ENCODE measurements at regions of chr16 and their contacts with region 1.

Region 1: DNA sequence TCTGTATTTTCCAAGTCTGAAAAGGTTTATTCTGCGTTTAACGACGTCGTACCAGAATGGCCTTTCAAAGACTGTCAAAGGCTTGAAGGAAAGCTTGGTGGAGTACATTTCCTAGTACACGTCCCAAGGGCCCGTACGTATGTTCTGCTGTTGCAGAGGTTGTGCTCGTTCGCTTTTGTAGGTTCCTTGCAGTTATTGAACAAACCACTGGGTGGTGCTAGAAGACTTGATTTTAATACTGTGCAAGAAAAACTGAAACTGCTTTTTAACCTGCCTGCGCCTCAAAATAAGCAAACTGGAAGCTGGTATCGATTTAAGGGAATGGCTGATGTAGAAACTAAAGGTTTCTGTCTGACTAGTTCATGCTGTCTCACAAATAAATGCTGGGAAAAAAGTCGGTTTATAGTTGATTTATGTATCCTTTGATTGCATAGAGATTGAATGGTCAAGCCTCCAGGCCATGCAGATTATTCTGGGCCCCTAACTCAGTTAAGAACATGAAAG is 54.6 kb downstream of the USP10 start:
- DNase-seq: peak in 1 of 2 donors; percentile 42
- ATAC-seq: peak; percentile 69 to 86 (median 78)
- H3K4me3 ChIP-seq: no peak overlapping the region
- H3K27ac ChIP-seq: no peak overlapping the region
- H3K4me1 ChIP-seq: peaks cover 27% of the 10 kb centered on the region
- H3K27me3 ChIP-seq: no peaks in the 10 kb centered on the region
- CTCF ChIP-seq: peak; percentile 86

Region 2: DNA sequence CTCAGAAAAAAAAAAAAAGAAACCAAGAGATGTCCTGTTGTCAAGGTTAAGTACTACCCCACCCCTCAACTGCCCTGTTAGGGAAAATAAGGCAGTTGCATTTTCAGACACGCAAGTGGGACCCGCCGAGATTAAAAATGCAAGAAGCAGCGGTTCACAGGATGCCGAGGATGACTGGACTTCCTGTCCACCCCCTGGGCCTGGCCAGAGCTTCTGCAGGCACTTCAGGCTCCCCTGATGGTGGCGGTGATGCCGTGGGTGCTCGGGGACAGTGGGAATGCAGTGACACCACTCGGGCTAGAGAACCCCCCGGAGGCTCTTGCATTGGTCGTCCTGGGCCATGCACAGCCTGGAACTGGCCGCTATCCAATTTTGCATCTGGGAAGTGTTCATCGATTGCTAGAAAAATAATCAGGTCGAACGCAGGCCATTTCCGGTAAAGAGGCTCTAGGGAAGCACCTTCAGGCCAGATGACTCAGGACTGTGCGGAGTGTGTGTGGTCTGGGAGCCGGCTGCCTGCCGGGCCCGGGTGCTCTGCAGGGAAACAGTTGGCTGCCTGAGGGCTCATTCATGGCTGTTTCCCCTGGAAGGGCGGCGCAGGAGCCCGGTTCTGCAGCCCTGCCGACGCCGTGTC is 52.0 kb after region 1 on chr16:
- intact Hi-C with region 1: loop called in 1 of 2 experiments (anchors 5 kb)
- DNase-seq: peak in 1 of 2 donors; percentile 77
- ATAC-seq: peak in 3 of 4 donors; percentile 59 to 68 (median 59)
- H3K4me3 ChIP-seq: no peak overlapping the region
- H3K27ac ChIP-seq: no peak overlapping the region
- H3K4me1 ChIP-seq: no peaks in the 10 kb centered on the region
- H3K27me3 ChIP-seq: no peaks in the 10 kb centered on the region
- CTCF ChIP-seq: no peak

Region 3: GRCh38 chr16:84952335-84953189 is 198.2 kb after region 1 on chr16:
- intact Hi-C with region 1: loop called (anchors 5 kb)
- DNase-seq: peak; percentile 66 to 75
- ATAC-seq: peak; percentile 93 to 98 (median 97)
- H3K4me3 ChIP-seq: no peak overlapping the region
- H3K27ac ChIP-seq: no peak overlapping the region
- H3K4me1 ChIP-seq: peaks cover 6% of the 10 kb centered on the region
- H3K27me3 ChIP-seq: no peaks in the 10 kb centered on the region
- CTCF ChIP-seq: peak; percentile 95

Region 4: DNA sequence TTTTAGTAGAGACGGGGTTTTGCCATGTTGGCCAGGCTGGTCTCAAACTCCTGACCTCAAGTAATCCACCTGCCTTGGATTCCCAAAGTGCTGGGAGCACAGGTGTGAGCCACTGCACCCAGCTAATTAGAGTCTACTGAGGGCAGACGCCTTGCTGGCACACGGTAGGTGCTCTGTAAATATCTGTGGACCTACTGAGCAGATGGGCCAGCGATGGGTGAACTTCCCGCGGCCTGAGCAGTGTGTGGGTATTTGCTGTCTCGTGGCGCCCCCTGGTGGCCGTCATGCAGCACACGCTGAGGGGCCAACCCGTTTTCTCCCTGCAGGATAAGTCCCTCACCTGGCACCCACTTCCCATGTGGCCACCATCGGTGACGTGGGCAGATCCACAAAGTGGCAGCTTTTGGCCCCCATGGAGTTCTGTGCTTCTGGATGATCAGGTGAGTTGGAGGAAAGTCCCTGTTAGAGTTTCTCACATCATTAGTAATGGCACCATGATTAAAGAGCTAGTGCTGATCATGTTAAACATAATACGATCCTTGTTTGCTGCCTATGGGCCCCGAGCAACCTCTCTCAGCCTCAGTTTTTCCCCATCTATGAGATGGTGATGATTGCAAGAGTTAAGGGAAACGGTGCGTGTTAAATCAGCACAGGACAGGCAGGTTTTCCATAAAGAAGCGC is 216.2 kb after region 1 on chr16:
- intact Hi-C with region 1: loop called (anchors 5 kb)
- DNase-seq: peak; percentile 84 to 89
- ATAC-seq: peak; percentile 76 to 83 (median 80)
- H3K4me3 ChIP-seq: no peak overlapping the region
- H3K27ac ChIP-seq: no peak overlapping the region
- H3K4me1 ChIP-seq: peaks cover 14% of the 10 kb centered on the region
- H3K27me3 ChIP-seq: no peaks in the 10 kb centered on the region
- CTCF ChIP-seq: peak; percentile 88

Measured in psoas muscle (tissue), 8 donors.